Activated naive CD4-positive, alpha-beta T cell treated with anti-CD3 and anti-CD28 coated beads for 36 hours (primary cell): ENCODE measurements at regions of chr17 and their contacts with region 1.

Region 1: DNA sequence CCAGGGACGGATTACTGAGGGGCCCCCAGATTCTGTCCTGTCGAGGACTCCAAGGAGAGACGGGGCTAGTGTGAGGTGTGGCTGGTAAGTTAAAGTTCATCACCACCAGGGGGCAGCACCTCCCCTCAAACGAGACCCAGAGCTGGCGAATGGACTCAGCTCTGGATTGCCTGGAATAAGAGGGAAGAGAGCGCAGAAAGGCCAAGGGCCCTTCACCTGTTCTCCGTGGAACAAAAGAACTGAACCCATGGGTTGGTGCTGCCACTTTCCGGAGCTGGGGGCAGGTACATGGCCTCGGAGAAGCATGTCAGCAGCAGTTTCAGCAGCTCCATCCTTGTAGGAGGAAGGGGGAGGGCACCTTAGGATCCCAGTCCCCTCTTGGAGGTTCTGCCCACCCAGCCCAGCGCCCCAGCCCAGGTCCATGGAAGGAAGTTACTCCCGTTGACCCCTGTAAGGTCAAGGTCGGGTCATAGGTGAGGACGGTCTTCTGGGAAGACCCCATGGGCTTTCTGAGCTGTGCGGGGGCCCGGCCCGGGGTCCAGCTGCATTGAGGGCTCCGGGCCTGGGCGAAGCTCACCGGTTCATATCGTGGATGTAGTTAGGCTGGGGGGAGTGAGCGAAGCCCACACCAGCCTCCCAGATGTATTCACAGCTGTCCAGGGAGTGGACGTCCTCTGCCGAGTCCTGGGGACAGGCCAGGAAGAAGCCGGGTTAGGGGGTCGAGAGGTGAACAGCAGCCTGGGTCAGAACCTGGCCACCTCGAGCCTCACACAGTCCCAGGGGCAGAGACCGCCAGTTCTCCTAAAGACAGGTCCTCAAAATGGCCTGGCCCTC is 10.7 kb downstream of the HID1 start:
- DNase-seq: peak; percentile 91
- H3K4me3 Mint-ChIP-seq: no peak overlapping the region
- H3K27ac Mint-ChIP-seq: no peak overlapping the region
- H3K4me1 Mint-ChIP-seq: peaks cover 7% of the 10 kb centered on the region
- H3K27me3 Mint-ChIP-seq: no peaks in the 10 kb centered on the region

Region 2: DNA sequence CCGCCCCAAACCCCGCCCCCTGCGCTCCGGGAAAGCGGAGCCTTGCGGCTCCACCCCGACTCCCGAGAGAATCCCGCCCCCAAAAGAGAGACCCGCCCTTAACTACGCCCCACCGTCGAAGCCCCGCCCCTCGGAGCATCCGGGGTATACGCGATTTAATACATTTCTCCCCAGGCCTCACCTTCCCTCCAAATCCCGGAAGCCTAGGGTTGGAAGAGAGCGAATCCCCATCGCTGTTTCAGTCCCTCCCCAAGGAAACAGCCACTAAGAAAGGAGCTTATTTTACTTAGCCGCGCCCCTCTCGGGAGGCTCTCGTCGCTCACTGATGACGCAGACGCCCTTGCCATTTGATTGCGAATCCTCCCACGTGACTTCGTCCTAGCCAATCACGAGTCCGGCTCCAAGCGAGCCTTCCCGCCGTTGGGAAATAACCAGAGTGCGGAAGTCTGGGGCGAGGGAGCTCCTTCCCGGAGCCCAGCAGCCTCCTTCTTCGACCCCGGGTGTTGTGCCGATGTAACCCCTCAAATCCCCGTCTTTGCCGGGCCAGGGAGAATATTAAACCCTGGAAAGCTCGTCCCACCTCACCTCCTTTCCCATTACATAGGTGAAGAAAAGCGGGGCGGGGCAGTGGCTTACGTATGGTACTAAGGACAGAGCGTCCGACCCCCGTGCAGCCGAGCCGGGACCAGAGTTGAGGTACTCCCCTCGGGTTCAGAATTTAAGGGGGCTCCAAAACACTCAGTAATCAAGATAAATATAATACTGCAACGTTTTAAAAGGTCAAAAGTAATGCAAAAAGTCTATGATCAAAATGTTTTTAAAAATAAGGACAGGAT is 88.6 kb before region 1 on chr17:
- CTCF ChIA-PET with region 1: interaction called, 12 read pairs
- intact Hi-C with region 1: loop called (anchors 1 kb)
- DNase-seq: peak; percentile 100
- H3K4me3 Mint-ChIP-seq: peak overlapping the region; percentile 88
- H3K27ac Mint-ChIP-seq: peak overlapping the region; percentile 91
- H3K4me1 Mint-ChIP-seq: peaks cover 27% of the 10 kb centered on the region
- H3K27me3 Mint-ChIP-seq: no peaks in the 10 kb centered on the region

Region 3: DNA sequence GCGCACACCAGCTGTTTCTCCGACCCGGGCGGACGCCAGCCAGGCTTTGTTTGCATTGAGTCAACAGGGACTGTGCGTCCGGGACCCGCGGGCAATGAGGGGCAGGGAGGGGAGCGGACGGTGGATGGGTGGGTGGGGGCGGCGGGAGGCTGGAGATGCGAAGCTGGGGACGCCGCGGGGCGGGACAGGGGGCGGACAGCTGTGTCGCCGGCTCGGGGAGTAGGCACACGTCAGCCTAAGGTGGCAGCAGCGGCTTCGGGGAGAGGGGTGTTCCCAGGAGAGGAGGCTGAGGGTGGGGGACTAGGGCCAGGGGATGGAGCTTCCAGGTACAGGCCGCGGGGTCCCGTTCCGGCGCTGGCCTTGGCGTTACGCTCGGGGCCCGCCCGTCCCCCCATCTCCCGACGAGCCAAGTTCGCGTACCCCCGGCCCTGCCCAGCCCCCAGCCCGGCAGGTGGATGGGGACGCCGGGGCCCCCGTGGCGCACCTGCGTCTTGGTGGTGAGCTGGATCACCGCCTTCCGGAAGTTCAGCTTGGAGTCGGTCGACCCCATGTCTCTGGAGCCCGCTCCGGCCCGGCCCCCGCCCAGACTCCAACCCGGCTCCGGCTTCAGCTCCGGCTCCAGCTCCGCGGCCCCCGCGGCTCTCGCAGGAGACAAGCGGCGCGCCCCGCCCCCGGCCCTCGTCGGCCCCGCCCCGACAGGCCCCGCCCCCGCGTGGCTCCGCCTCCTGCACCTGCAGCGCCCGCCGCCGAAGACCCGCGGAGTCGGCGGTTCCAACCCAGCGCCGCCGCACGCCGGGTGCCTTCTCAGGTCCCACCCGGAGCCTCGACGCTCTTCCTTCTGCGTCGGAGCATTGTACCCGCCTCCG is 10.5 kb after region 1 on chr17 and contains the start of gene HID1:
- CTCF ChIA-PET with region 1: interaction called, 68 read pairs
- intact Hi-C with region 1: no loop called
- DNase-seq: peak; percentile 70
- H3K4me3 Mint-ChIP-seq: peak within 1 kb of the TSS; percentile 72
- H3K27ac Mint-ChIP-seq: no peak within 1 kb of the TSS
- H3K4me1 Mint-ChIP-seq: peaks cover 9% of the 10 kb centered on the region
- H3K27me3 Mint-ChIP-seq: peaks cover 6% of the 10 kb centered on the region
- total RNA-seq, gene HID1: 0.91 to 1.6 TPM

Region 4: GRCh38 chr17:75012346-75013091 is 50.6 kb after region 1 on chr17 and contains the start of gene MRPL58:
- CTCF ChIA-PET with region 1: interaction called, 56 read pairs
- intact Hi-C with region 1: loop called (anchors 2 kb)
- DNase-seq: peak; percentile 86
- H3K4me3 Mint-ChIP-seq: peak within 1 kb of the TSS; percentile 91
- H3K27ac Mint-ChIP-seq: peak within 1 kb of the TSS; percentile 81
- H3K4me1 Mint-ChIP-seq: peaks cover 35% of the 10 kb centered on the region
- H3K27me3 Mint-ChIP-seq: no peaks in the 10 kb centered on the region
- total RNA-seq, gene MRPL58: 60.6 to 64.5 TPM

Region 5: GRCh38 chr17:75087558-75088453 is 125.9 kb after region 1 on chr17 and contains the start of gene SLC16A5:
- CTCF ChIA-PET with region 1: interaction called, 7 read pairs
- intact Hi-C with region 1: loop called (anchors 5 kb)
- DNase-seq: peak; percentile 58
- H3K4me3 Mint-ChIP-seq: peak within 1 kb of the TSS; percentile 70
- H3K27ac Mint-ChIP-seq: peak within 1 kb of the TSS; percentile 56
- H3K4me1 Mint-ChIP-seq: peaks cover 44% of the 10 kb centered on the region
- H3K27me3 Mint-ChIP-seq: no peaks in the 10 kb centered on the region
- total RNA-seq, gene SLC16A5: 2.5 to 3.1 TPM